Naive thymus-derived CD4-positive, alpha-beta T cell (primary cell): ENCODE measurements at regions of chr7 and their contacts with region 1.

Region 1: DNA sequence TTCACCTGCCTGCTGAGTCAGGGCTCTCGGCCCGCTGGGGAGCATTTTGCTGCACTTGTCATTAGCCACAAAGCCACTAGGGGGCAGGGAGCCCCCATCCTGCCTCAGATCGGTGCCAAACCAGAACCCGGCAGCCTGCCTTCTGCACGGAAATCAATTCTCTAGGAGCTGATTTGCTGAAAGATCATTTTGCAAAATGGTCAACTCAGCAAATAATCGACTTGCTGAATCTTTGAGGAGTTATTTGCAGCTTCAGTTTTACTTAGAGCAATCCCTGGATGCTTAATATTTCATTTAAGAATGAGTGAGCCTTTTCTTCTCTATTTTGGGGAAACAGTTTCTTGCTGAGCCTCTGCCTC is 1.7 kb upstream of the GIMAP8 start:
- DNase-seq: peak; percentile 73 to 91 (median 88)
- ATAC-seq: peak; percentile 73
- H3K4me3 ChIP-seq: peak overlapping the region; percentile 65
- H3K4me3 Mint-ChIP-seq: peak overlapping the region; percentile 94 to 100 (median 98)
- H3K27ac ChIP-seq: peak overlapping the region; percentile 84
- H3K27ac Mint-ChIP-seq: peak overlapping the region; percentile 95 to 99 (median 97)
- H3K4me1 ChIP-seq: peaks cover 32 to 36% of the 10 kb centered on the region in 2 donors
- H3K4me1 Mint-ChIP-seq: peaks cover 36 to 54% (median 43%) of the 10 kb centered on the region in 7 donors
- H3K27me3 ChIP-seq: no peaks in the 10 kb centered on the region
- H3K27me3 Mint-ChIP-seq: no peaks in the 10 kb centered on the region

Region 2: GRCh38 chr7:150502519-150502918 is 53.8 kb after region 1 on chr7:
- CTCF ChIA-PET with region 1: interaction called, 21 read pairs
- POLR2A ChIA-PET with region 1: interaction called, 297 read pairs
- intact Hi-C with region 1: no loop called
- DNase-seq: peak in 7 of 9 donors; percentile 54 to 80 (median 71)
- ATAC-seq: peak; percentile 95
- H3K4me3 ChIP-seq: peak overlapping the region; percentile 15
- H3K4me3 Mint-ChIP-seq: peak overlapping the region; percentile 55 to 93 (median 70)
- H3K27ac ChIP-seq: peak overlapping the region; percentile 71
- H3K27ac Mint-ChIP-seq: peak overlapping the region; percentile 90 to 98 (median 94)
- H3K4me1 ChIP-seq: peaks cover 34 to 46% of the 10 kb centered on the region in 2 donors
- H3K4me1 Mint-ChIP-seq: peaks cover 38 to 98% (median 93%) of the 10 kb centered on the region in 7 donors
- H3K27me3 ChIP-seq: no peaks in the 10 kb centered on the region
- H3K27me3 Mint-ChIP-seq: no peaks in the 10 kb centered on the region

Region 3: DNA sequence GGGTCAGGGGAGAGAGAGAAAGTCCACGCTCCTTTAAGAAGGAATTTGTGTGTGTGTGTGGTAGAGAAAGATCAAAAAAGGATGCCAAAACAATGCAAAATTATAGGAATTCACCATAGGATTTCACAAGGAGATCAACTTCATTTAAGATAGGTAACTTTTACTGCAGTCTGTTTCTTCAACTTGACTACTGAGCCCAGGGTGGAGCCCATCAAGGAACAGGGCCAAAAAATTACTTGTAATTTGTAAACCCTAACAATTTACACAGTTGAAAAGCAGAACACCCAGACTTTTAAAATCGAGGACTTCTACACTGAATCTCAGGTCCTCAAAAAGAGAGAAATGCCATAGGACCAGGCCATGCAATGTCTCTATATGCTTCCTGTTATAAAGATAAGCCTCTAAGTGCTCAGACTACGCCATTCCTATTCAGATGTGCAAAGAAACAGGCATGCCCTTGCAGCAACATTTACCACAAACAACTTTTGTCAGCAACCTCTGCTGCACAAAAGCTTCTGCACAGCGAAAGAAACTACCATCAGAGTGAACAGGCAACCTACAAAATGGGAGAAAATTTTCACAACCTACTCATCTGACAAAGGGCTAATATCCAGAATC is 107.9 kb after region 1 on chr7:
- CTCF ChIA-PET with region 1: interaction called, 8 read pairs
- POLR2A ChIA-PET with region 1: interaction called, 455 read pairs
- intact Hi-C with region 1: loop called in 1 of 2 experiments (anchors 2 kb)
- DNase-seq: peak in 7 of 9 donors; percentile 45 to 84 (median 73)
- ATAC-seq: peak; percentile 99
- H3K4me3 ChIP-seq: peak overlapping the region; percentile 42
- H3K4me3 Mint-ChIP-seq: peak overlapping the region; percentile 48 to 92 (median 78)
- H3K27ac ChIP-seq: peak overlapping the region; percentile 66
- H3K27ac Mint-ChIP-seq: peak overlapping the region; percentile 89 to 99 (median 94)
- H3K4me1 ChIP-seq: peaks cover 47 to 74% of the 10 kb centered on the region in 2 donors
- H3K4me1 Mint-ChIP-seq: peaks cover 45 to 95% (median 90%) of the 10 kb centered on the region in 7 donors
- H3K27me3 ChIP-seq: no peaks in the 10 kb centered on the region
- H3K27me3 Mint-ChIP-seq: no peaks in the 10 kb centered on the region

Region 4: DNA sequence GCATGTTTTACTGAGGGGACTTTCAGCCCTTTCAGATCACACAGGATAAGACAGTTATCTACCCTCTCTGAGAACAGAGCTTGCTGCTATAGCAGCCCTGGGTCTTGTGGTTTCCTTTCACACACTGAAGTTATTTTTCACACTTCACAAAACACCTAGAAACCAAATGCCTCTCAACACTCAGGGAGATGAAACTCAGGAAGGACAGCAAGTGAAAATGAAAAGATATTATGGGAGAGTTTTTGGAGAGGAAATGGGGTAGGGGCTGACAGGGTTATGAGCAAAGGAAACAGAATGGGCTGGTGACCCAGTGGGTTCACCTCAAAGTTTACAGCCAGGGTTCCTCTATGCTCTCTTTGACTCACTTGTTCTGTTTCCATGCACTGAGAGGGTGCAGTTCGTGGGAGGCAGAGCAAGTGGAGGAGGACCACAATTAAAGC is 219.7 kb after region 1 on chr7:
- CTCF ChIA-PET with region 1: interaction called, 3 read pairs
- POLR2A ChIA-PET with region 1: interaction called, 23 read pairs
- intact Hi-C with region 1: loop called in 1 of 2 experiments (anchors 2 kb)
- DNase-seq: peak in 8 of 9 donors; percentile 66 to 87 (median 81)
- ATAC-seq: peak; percentile 88
- H3K4me3 ChIP-seq: peak overlapping the region; percentile 30
- H3K4me3 Mint-ChIP-seq: peak overlapping the region; percentile 57 to 85 (median 72)
- H3K27ac ChIP-seq: peak overlapping the region; percentile 78
- H3K27ac Mint-ChIP-seq: peak overlapping the region; percentile 73 to 100 (median 97)
- H3K4me1 ChIP-seq: peaks cover 71 to 86% of the 10 kb centered on the region in 2 donors
- H3K4me1 Mint-ChIP-seq: peaks cover 58 to 99% (median 94%) of the 10 kb centered on the region in 7 donors
- H3K27me3 ChIP-seq: no peaks in the 10 kb centered on the region
- H3K27me3 Mint-ChIP-seq: no peaks in the 10 kb centered on the region

Region 5: DNA sequence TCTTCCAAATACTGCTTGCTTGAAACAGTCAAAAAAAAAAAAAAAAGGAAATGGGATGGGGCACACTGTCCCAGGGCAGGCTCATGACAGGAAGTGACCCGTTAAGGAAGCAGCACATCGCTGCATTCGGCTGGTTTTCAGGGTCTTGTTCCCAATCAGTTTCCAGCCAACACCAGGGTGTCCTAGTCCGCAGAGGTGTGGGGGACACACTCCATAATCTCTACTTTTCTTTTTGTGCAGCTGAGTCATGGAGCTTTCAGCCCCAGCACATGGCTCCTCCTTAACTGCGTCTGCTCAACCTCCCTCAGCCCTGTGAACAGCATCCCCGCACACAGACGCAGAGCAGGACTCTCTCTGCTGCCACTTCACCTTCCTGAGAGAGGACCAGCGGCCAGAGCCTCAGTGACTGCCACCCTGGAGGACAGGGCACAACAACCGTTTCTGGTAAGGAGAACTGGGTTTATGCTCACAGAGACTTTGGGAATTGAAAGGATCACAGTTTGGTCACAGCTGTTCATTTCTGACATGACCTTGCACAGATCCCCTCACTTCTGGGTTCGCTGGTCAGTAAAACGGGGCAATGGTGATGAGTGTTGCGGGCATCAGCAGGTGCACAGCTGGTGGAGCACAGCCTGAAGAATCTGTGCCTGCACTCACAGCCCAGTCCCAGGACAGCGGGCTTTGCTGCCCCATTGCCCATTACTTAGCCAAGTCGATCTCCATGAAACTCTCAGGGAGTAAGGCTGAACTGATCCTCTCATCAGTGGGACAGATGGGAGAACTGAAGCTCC is 288.7 kb after region 1 on chr7 and contains the start of gene GIMAP5:
- CTCF ChIA-PET with region 1: interaction called, 8 read pairs
- POLR2A ChIA-PET with region 1: interaction called, 184 read pairs
- intact Hi-C with region 1: loop called (anchors 1 kb)
- DNase-seq: peak in 6 of 9 donors; percentile 47 to 57 (median 56)
- ATAC-seq: peak; percentile 79
- H3K4me3 ChIP-seq: peak within 1 kb of the TSS; percentile 84
- H3K4me3 Mint-ChIP-seq: peak within 1 kb of the TSS; percentile 90 to 100 (median 98)
- H3K27ac ChIP-seq: peak within 1 kb of the TSS; percentile 82
- H3K27ac Mint-ChIP-seq: peak within 1 kb of the TSS; percentile 87 to 99 (median 96)
- H3K4me1 ChIP-seq: peaks cover 49 to 56% of the 10 kb centered on the region in 2 donors
- H3K4me1 Mint-ChIP-seq: peaks cover 56 to 73% (median 65%) of the 10 kb centered on the region in 7 donors
- H3K27me3 ChIP-seq: no peaks in the 10 kb centered on the region
- H3K27me3 Mint-ChIP-seq: no peaks in the 10 kb centered on the region
- total RNA-seq, gene GIMAP5: 58.1 to 422 (median 214) TPM